Activated B cell treated with CpG ODN at 0.5 μM for 24 hours (primary cell): ENCODE measurements at regions of chrX and their contacts with region 1.

Region 1: GRCh38 chrX:129957241-129958082 is 25.0 kb upstream of the BCORL1 start:
- DNase-seq: peak; percentile 64
- ATAC-seq: peak; percentile 73
- H3K4me3 Mint-ChIP-seq: peak overlapping the region; percentile 77
- H3K27ac Mint-ChIP-seq: peak overlapping the region; percentile 59
- H3K4me1 Mint-ChIP-seq: peaks cover 37% of the 10 kb centered on the region
- H3K27me3 Mint-ChIP-seq: peaks cover 2% of the 10 kb centered on the region
- CTCF ChIP-seq: no peak

Region 2: DNA sequence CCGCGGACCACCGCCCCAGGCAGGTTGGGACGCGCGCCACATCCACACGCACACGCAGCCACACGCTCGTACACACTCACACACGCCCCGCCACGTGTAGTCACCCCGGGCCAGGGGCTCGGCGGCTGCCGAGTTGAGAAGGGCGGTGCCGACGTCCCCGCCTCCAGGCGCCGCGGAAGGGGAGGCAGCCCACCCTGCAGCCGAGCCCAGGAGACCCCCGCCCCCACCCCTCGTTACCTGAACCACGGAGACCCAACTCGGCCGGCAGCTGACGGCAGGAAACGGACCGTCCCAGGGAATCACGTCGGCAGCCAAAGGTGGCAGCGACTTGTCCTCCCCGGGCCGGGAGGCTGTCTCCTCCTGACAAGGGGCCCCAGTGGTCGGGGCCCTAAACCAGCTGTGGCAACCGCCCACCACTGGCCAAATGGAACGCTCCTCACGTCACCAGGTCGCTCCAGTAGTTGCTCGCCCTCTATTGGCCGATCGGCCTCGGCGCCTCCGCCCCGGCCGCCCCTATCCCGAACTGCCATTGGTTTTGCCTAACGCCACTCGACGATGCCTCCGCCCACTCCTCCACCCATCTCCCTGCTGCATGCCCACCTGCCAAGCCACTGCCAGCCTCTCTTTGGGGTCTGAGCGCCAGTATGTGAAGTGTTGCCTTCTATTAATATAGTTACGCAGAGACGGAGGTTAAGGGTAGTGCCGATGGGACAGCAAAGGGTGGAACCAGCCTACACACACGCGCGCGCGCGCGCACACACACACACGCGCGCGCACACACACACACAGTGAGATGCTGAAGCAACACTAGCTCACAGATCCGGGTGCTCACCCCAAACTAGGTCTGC is 113.8 kb before region 1 on chrX and contains the start of gene ZDHHC9:
- CTCF ChIA-PET with region 1: no interaction called
- POLR2A ChIA-PET with region 1: no interaction called
- intact Hi-C with region 1: loop called (anchors 1 kb)
- DNase-seq: peak; percentile 74
- ATAC-seq: peak; percentile 99
- H3K4me3 Mint-ChIP-seq: peak within 1 kb of the TSS; percentile 94
- H3K27ac Mint-ChIP-seq: peak within 1 kb of the TSS; percentile 77
- H3K4me1 Mint-ChIP-seq: peaks cover 14% of the 10 kb centered on the region
- H3K27me3 Mint-ChIP-seq: no peaks in the 10 kb centered on the region
- CTCF ChIP-seq: no peak
- total RNA-seq, gene ZDHHC9: 3.9 and 4.2 TPM in 2 replicates

Region 3: GRCh38 chrX:129931411-129932015 is 25.9 kb before region 1 on chrX:
- CTCF ChIA-PET with region 1: interaction called, 3 read pairs
- POLR2A ChIA-PET with region 1: interaction called, 14 read pairs
- intact Hi-C with region 1: loop called (anchors 1 kb)
- DNase-seq: peak; percentile 59
- ATAC-seq: peak; percentile 70
- H3K4me3 Mint-ChIP-seq: peak overlapping the region; percentile 86
- H3K27ac Mint-ChIP-seq: peak overlapping the region; percentile 90
- H3K4me1 Mint-ChIP-seq: peaks cover 5% of the 10 kb centered on the region
- H3K27me3 Mint-ChIP-seq: no peaks in the 10 kb centered on the region
- CTCF ChIP-seq: no peak